Activated T-helper 1 cell treated with anti-CD3 and anti-CD28 coated beads, Interleukin-12 subunit alpha, Interleukin-12 subunit beta, Interleukin-2, Interleukin-4 antibody, amounts not matched to agents 30 ng/mL and 10 ng/mL and 1 ng/mL, durations not matched to agents 14 hours and 24 hours and 36 hours (primary cell): ENCODE measurements at regions of chr11 and their contacts with region 1.

Region 1: GRCh38 chr11:62841361-62842184 is 2.2 kb upstream of the WDR74 start:
- DNase-seq: peak; percentile 83
- H3K4me3 Mint-ChIP-seq: no peak overlapping the region
- H3K27ac Mint-ChIP-seq: no peak overlapping the region
- H3K4me1 Mint-ChIP-seq: peaks cover 18% of the 10 kb centered on the region
- H3K27me3 Mint-ChIP-seq: no peaks in the 10 kb centered on the region

Region 2: GRCh38 chr11:61827571-61828378 is 1013.8 kb before region 1 on chr11 and contains the start of gene FADS2:
- intact Hi-C with region 1: loop called (anchors 5 kb)
- DNase-seq: peak; percentile 91
- H3K4me3 Mint-ChIP-seq: peak within 1 kb of the TSS; percentile 93
- H3K27ac Mint-ChIP-seq: peak within 1 kb of the TSS; percentile 96
- H3K4me1 Mint-ChIP-seq: peaks cover 50% of the 10 kb centered on the region
- H3K27me3 Mint-ChIP-seq: no peaks in the 10 kb centered on the region
- total RNA-seq, gene FADS2: 250 and 256 TPM in 2 replicates

Region 3: GRCh38 chr11:62621567-62622470 is 219.8 kb before region 1 on chr11 and contains the start of gene B3GAT3:
- intact Hi-C with region 1: loop called (anchors 5 kb)
- DNase-seq: peak; percentile 96
- H3K4me3 Mint-ChIP-seq: peak within 1 kb of the TSS; percentile 95
- H3K27ac Mint-ChIP-seq: peak within 1 kb of the TSS; percentile 96
- H3K4me1 Mint-ChIP-seq: peaks cover 25% of the 10 kb centered on the region
- H3K27me3 Mint-ChIP-seq: no peaks in the 10 kb centered on the region
- total RNA-seq, gene B3GAT3: 93.8 and 94.3 TPM in 2 replicates

Region 4: DNA sequence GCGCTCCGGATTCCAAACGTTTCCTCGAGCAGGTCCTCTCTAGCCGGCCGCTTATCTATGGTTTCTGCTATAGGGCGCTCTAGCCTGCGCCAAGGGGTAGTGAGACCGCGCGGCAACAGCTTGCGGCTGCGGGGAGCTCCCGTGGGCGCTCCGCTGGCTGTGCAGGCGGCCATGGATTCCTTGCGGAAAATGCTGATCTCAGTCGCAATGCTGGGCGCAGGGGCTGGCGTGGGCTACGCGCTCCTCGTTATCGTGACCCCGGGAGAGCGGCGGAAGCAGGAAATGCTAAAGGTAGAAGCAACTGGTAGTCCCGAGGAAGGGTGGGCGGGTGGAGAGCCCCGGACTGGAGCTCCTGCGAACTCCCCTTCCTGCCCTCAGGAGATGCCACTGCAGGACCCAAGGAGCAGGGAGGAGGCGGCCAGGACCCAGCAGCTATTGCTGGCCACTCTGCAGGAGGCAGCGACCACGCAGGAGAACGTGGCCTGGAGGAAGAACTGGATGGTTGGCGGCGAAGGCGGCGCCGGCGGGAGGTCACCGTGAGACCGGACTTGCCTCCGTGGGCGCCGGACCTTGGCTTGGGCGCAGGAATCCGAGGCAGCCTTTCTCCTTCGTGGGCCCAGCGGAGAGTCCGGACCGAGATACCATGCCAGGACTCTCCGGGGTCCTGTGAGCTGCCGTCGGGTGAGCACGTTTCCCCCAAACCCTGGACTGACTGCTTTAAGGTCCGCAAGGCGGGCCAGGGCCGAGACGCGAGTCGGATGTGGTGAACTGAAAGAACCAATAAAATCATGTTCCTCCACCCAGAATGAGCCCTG is 169.8 kb before region 1 on chr11 and contains the starts of genes LBHD1 and UQCC3:
- intact Hi-C with region 1: loop called (anchors 2 kb)
- DNase-seq: peak; percentile 75
- H3K4me3 Mint-ChIP-seq: peak within 1 kb of the TSS; percentile 97
- H3K27ac Mint-ChIP-seq: peak within 1 kb of the TSS; percentile 98
- H3K4me1 Mint-ChIP-seq: peaks cover 34% of the 10 kb centered on the region
- H3K27me3 Mint-ChIP-seq: no peaks in the 10 kb centered on the region
- total RNA-seq, gene LBHD1: 23.4 and 24.3 TPM in 2 replicates
- total RNA-seq, gene UQCC3: 8.9 and 11.4 TPM in 2 replicates

Region 5: DNA sequence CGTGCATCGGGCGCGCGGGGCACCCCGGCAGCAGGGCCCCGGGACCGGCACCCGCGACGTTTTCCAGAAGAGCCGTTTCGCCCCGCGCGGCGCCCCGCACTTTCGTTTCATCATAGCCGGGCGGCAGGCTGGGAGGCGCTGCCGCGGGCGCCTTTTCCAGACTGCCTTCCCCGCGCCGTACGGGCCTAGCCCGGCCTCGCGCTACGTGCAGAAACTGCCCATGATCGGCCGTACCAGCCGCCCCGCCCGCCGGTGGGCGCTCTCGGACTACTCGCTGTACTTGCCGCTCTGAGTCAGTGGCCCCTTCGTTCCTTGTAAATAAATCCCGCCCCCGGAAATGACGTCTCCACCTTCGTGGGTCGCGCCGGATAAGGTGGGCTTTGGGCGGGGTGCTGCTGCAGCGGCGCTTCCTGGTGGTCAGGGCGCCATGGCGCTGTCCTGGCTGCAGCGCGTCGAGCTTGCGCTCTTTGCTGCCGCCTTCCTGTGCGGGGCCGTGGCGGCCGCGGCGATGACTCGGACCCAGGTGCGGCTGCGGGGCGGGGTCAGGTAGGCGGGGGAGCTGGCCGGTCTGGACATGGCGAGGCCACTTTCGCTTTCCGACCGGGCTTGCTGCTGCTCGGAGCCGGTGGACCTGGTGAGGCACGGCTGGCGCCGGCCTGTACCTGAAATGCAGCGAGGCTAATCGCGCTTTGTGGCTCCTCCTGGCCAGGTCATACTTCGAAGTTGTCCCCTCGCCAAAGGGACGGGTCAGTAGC is 54.4 kb before region 1 on chr11 and contains the start of gene TMEM179B:
- intact Hi-C with region 1: loop called (anchors 1 kb)
- DNase-seq: peak; percentile 96
- H3K4me3 Mint-ChIP-seq: peak within 1 kb of the TSS; percentile 95
- H3K27ac Mint-ChIP-seq: peak within 1 kb of the TSS; percentile 94
- H3K4me1 Mint-ChIP-seq: peaks cover 42% of the 10 kb centered on the region
- H3K27me3 Mint-ChIP-seq: no peaks in the 10 kb centered on the region
- total RNA-seq, gene TMEM179B: 40.6 and 43.0 TPM in 2 replicates

Region 6: DNA sequence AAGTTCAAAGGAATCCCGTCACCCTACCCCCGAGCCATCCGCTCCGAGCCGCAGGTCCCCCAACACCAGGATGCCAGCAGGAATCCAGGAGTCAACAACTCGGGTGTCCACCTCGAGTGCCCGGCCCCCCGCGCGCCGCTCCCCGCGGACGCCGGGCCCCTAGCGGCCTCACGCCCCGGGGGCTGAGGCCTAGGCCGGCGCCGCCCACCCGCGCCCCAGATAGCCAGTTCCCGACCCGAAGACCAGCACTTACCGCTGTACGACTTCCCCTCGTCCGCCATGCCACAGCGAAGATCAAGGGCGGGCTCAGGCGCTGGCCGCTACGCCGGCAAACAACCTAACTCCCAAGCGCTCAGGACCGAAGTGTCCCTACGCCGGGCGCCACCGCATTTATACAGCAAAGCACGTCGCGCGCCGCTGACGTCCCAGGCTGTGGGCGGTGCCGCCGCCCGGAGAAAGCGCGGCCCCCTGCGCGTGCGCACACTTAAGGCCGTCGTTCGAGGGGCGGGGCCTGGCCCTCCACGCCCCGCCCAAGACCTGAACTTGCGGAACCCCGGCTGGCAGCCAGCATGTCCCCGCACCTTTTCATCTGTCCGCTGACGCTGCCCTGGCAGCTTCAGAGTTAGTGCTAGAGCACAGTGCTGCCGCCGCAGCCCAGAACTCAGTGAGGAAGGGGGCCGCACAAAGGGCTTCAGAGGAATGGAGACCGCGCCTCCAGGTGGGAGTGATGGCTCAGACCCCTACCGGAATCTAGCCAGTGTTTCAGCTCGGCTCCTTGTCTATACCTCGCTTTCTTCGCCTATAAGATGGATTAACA is 36.3 kb before region 1 on chr11 and contains the start of gene NXF1:
- intact Hi-C with region 1: loop called (anchors 1 kb)
- DNase-seq: peak; percentile 95
- H3K4me3 Mint-ChIP-seq: peak within 1 kb of the TSS; percentile 100
- H3K27ac Mint-ChIP-seq: peak within 1 kb of the TSS; percentile 99
- H3K4me1 Mint-ChIP-seq: peaks cover 40% of the 10 kb centered on the region
- H3K27me3 Mint-ChIP-seq: peaks cover 2% of the 10 kb centered on the region
- total RNA-seq, gene NXF1: 155 and 158 TPM in 2 replicates

Region 7: DNA sequence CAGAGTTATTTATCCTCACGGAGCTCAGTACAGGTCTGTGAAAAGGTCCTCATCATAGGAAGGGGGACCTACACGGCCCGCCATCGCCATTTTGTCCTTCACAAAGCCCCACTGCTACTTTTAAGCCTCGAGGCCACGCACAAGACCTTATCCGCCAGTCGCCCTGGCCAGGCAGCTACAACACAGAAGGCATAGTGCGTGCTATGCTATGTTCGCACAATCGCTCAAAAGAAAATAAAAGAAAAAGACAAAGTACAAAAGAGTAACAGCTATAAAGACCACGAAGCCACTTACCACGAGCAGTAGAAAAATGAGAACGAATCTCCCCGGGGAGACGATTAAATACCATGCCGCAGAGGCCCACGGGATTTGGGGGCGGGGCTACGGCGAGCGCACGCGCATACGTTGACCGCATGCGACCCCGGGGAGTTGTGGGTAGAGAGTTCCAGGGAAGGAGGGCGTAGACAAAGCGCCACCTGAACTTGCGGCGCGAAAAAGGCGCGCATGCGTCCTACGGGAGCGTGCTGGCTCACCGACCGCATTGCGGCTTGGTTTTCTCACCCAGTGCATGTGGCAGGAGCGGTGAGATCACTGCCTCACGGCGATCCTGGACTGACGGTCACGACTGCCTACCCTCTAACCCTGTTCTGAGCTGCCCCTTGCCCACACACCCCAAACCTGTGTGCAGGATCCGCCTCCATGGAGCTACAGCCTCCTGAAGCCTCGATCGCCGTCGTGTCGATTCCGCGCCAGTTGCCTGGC is 14.2 kb after region 1 on chr11:
- intact Hi-C with region 1: loop called (anchors 1 kb)
- DNase-seq: peak; percentile 99
- H3K4me3 Mint-ChIP-seq: peak overlapping the region; percentile 98
- H3K27ac Mint-ChIP-seq: peak overlapping the region; percentile 98
- H3K4me1 Mint-ChIP-seq: peaks cover 71% of the 10 kb centered on the region
- H3K27me3 Mint-ChIP-seq: peaks cover 5% of the 10 kb centered on the region

Region 8: GRCh38 chr11:62980133-62980760 is 138.7 kb after region 1 on chr11:
- intact Hi-C with region 1: no loop called
- DNase-seq: no peak
- H3K4me3 Mint-ChIP-seq: no peak overlapping the region
- H3K27ac Mint-ChIP-seq: no peak overlapping the region
- H3K4me1 Mint-ChIP-seq: no peaks in the 10 kb centered on the region
- H3K27me3 Mint-ChIP-seq: no peaks in the 10 kb centered on the region